Common myeloid progenitor, CD34-positive (primary cell): ENCODE measurements at regions of chr5 and their contacts with region 1.

Region 1: GRCh38 chr5:177351385-177352329 is at the start of gene LMAN2:
- DNase-seq: peak; percentile 95 to 98 (median 97)
- H3K4me3 ChIP-seq: peak within 1 kb of the TSS; percentile 85 to 99 (median 97)
- H3K27ac ChIP-seq: peak within 1 kb of the TSS; percentile 97 to 99
- H3K4me1 ChIP-seq: peaks cover 10 to 51% (median 40%) of the 10 kb centered on the region in 4 experiments
- H3K27me3 ChIP-seq: no peaks in the 10 kb centered on the region

Region 2: GRCh38 chr5:176447982-176448608 is 903.6 kb before region 1 on chr5 and contains the start of gene FAF2:
- CTCF ChIA-PET with region 1: no interaction called
- POLR2A ChIA-PET with region 1: no interaction called
- DNase-seq: peak; percentile 99
- H3K4me3 ChIP-seq: peak within 1 kb of the TSS; percentile 84 to 100 (median 96)
- H3K27ac ChIP-seq: peak within 1 kb of the TSS; percentile 96 to 99
- H3K4me1 ChIP-seq: peaks cover 4 to 28% (median 21%) of the 10 kb centered on the region in 4 experiments
- H3K27me3 ChIP-seq: no peaks in the 10 kb centered on the region

Region 3: DNA sequence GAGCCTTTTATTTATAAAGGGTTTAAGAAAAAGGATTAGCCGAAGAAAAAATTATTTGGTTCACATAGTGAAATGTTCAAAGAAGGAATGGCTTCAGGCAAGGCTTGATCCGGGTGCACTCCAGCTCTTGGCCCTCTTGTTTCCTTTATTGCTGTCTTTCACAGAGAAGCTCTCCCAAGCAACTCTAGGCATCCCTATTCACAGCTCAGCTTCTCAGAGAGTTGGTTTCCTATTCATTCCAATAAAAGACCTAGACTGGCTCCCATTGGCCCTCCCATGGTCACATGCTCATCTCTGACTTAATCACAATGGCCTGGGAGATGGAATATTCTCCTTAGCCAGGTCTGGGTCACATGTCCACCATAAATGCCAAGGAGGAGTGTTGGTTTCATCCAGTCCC is 274.3 kb before region 1 on chr5:
- CTCF ChIA-PET with region 1: no interaction called
- POLR2A ChIA-PET with region 1: no interaction called
- DNase-seq: no peak
- H3K4me3 ChIP-seq: no peak overlapping the region
- H3K27ac ChIP-seq: no peak overlapping the region
- H3K4me1 ChIP-seq: no peaks in the 10 kb centered on the region
- H3K27me3 ChIP-seq: peaks cover 0 to 2% (median 0%) of the 10 kb centered on the region in 5 experiments

Region 4: DNA sequence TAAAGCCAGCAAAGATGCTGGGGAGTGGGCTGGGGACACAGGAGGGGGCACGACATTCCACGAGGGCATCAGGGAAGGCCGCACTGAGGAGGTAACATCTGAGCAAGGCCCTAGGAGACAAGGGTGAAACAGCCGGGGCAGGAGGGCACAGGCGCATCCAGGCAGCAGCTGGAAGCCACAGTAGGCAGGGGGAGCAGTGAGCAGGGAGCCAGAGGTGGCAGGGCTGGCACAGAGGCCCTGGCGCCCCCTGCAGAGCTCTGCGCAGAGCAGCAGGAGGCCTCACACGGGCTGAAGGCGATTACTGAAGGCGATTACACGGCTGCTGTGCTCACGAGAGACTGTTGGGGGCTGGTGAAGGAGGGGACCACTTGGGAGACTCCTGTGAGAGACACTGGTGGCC is 15.5 kb before region 1 on chr5:
- CTCF ChIA-PET with region 1: interaction called, 10 read pairs
- POLR2A ChIA-PET with region 1: no interaction called
- DNase-seq: peak; percentile 83 to 90 (median 89)
- H3K4me3 ChIP-seq: no peak overlapping the region
- H3K27ac ChIP-seq: no peak overlapping the region
- H3K4me1 ChIP-seq: peaks cover 6 to 27% (median 24%) of the 10 kb centered on the region in 4 experiments
- H3K27me3 ChIP-seq: no peaks in the 10 kb centered on the region

Region 5: DNA sequence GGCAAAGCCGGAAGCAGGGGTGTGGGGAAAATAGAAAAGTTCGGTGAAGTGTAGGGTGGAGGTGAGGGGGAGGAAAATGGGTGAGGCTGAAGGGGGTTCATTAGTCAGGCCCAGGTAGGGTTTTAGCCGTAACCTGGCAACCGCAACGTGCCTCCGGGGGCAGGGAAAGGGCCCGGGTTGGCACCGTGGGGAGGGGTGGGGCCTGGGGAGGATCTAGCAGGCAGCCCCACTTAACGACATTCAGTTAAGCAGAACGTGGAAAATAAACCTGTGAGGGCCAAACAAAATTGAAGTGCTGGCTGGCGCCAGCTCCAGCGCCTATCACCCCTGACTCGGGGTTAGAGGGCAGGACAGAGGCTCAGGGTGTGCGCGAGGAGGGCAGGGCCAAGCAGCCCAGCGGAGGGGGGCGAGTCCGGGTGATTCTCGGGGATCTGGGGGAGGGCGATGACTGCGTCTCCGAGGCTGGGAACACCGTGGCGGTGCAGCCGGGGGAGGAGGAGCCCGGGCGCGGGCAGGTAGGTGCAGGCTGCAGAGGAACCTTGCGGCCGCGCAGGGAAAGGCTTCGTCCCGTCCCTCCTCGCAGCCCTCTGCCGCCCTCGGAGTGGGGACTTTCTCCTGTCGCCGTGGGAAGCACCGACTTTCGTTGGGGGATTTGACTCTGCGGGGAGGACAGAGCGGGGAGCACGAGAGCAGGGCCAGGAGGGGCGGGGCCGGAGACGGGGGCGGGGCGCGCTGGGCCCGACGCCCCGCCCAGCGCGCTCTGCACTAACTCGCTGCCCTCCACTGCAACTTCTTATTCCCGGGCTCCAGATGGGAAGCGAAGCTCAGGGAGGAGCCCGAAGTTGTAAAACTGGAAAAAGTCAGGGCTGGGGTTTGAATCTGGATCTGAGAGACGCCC is 11.2 kb after region 1 on chr5:
- CTCF ChIA-PET with region 1: interaction called, 131 read pairs
- POLR2A ChIA-PET with region 1: interaction called, 9 read pairs
- DNase-seq: peak in 2 of 3 donors; percentile 61 to 70
- H3K4me3 ChIP-seq: peak overlapping the region in 6 of 7 experiments; percentile 2 to 74 (median 42)
- H3K27ac ChIP-seq: peak overlapping the region in 1 of 2 experiments; percentile 58
- H3K4me1 ChIP-seq: peaks cover 0 to 71% (median 60%) of the 10 kb centered on the region in 4 experiments
- H3K27me3 ChIP-seq: no peaks in the 10 kb centered on the region

Region 6: DNA sequence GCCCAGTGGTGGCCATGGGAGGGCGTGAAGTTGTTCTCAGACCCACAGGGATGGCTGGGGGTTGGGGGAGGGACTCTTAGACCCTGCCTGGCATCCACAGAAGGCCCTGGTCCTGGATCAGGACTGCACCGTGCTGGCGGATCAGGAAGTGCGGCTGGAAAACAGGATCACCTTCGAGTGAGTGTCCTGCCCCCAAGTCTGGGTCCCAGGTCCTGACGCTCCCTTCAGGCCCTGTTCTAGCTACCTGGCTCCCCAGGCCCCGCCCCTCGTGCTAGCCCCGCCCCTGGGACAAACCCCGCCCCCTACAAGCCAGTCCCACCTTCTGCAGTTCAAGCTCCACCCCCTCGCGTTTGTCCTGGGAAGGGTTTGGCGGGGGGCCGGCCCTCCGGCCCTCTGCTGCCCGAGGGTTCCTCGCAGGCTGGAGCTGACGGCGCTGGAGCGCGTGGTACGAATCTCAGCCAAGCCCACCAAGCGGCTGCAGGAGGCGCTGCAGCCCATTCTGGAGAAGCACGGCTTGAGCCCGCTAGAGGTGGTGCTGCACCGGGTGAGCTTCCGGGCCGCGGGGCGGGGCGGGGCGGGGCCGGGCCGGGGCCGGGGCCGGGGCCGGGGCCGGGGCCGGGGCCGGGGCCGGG is 18.9 kb after region 1 on chr5:
- CTCF ChIA-PET with region 1: interaction called, 131 read pairs
- POLR2A ChIA-PET with region 1: no interaction called
- DNase-seq: peak; percentile 83 to 85 (median 85)
- H3K4me3 ChIP-seq: peak overlapping the region in 1 of 7 experiments; percentile 72
- H3K27ac ChIP-seq: no peak overlapping the region
- H3K4me1 ChIP-seq: peaks cover 0 to 48% (median 41%) of the 10 kb centered on the region in 4 experiments
- H3K27me3 ChIP-seq: no peaks in the 10 kb centered on the region

Region 7: DNA sequence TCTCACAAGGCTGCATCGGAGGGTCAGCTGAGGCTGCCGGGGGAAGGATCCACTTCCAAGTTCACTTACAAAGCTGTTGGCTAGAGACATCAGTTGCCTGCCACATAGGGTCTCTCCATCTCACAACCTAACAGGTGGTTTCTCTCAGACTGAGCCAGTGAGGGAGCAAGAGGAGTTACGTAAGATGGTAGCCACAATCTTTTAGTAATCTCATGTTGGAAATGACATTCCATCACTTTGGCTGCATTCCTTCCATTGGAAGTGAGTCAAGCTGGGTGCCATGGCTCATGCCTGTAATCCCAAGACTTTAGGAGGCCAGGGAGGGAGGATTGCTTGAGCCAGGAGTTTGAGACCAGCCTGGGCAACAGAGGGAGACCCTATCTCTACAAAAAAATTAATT is 67.4 kb after region 1 on chr5:
- CTCF ChIA-PET with region 1: no interaction called
- POLR2A ChIA-PET with region 1: no interaction called
- DNase-seq: no peak
- H3K4me3 ChIP-seq: no peak overlapping the region
- H3K27ac ChIP-seq: no peak overlapping the region
- H3K4me1 ChIP-seq: peaks cover 2 to 15% (median 6%) of the 10 kb centered on the region in 4 experiments
- H3K27me3 ChIP-seq: no peaks in the 10 kb centered on the region